Kidney (tissue), 22 donors: ENCODE measurements at regions of chr16 and their contacts with region 1.

Region 1: GRCh38 chr16:52488837-52489289 is 58.1 kb downstream of the TOX3 start:
- DNase-seq: no peak
- H3K4me3 ChIP-seq: no peak overlapping the region
- H3K27ac ChIP-seq: no peak overlapping the region
- H3K4me1 ChIP-seq: peaks cover 0 to 12% (median 3%) of the 10 kb centered on the region in 3 donors
- H3K27me3 ChIP-seq: no peaks in the 10 kb centered on the region
- CTCF ChIP-seq: no peak

Region 2: GRCh38 chr16:52351451-52351850 is 137.4 kb before region 1 on chr16:
- intact Hi-C with region 1: no loop called
- DNase-seq: no peak
- H3K4me3 ChIP-seq: no peak overlapping the region
- H3K27ac ChIP-seq: no peak overlapping the region
- H3K4me1 ChIP-seq: no peaks in the 10 kb centered on the region
- H3K27me3 ChIP-seq: no peaks in the 10 kb centered on the region
- CTCF ChIP-seq: no peak

Region 3: DNA sequence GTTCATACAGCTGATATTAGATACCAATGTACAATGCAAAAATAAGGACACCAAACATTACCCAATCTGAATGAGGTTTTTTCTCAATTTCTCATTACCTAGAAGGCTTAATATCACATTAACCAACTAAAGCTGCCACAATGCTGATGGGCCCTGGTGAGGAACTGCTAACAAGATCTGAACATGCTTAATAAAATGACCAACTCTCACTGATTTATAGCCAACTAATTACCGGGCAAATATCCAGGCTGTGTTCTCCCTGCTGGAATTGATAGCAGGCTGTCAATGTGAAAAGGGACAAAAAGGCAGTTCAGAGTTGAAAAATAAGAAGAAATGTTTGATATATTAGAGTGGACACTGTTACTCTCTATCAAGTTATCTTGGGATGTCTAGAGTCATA is 66.6 kb before region 1 on chr16:
- intact Hi-C with region 1: loop called (anchors 10 kb)
- DNase-seq: peak in 1 of 5 donors; percentile 14
- H3K4me3 ChIP-seq: no peak overlapping the region
- H3K27ac ChIP-seq: no peak overlapping the region
- H3K4me1 ChIP-seq: no peaks in the 10 kb centered on the region
- H3K27me3 ChIP-seq: no peaks in the 10 kb centered on the region
- CTCF ChIP-seq: no peak

Region 4: DNA sequence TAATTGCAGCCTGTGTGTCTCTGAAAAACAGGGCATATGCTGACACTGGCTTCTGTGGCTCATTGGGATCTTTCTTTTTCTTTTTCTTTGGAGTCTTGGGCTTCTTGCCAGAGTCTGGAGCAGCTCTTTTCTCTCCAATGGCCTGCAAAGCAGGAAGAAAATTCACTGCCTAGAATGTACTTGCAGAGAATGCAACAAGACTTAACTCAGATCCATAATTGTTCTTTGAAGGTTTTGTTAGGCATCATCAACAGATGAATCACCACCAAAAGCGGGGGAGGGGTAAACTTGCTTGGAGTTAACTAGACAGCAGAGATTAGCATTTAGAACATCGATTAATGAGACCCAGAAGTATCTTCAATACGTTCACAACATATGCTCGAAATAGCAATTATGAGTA is 42.8 kb before region 1 on chr16:
- intact Hi-C with region 1: no loop called
- DNase-seq: peak in 1 of 5 donors; percentile 15
- H3K4me3 ChIP-seq: no peak overlapping the region
- H3K27ac ChIP-seq: no peak overlapping the region
- H3K4me1 ChIP-seq: no peaks in the 10 kb centered on the region
- H3K27me3 ChIP-seq: no peaks in the 10 kb centered on the region
- CTCF ChIP-seq: no peak

Region 5: DNA sequence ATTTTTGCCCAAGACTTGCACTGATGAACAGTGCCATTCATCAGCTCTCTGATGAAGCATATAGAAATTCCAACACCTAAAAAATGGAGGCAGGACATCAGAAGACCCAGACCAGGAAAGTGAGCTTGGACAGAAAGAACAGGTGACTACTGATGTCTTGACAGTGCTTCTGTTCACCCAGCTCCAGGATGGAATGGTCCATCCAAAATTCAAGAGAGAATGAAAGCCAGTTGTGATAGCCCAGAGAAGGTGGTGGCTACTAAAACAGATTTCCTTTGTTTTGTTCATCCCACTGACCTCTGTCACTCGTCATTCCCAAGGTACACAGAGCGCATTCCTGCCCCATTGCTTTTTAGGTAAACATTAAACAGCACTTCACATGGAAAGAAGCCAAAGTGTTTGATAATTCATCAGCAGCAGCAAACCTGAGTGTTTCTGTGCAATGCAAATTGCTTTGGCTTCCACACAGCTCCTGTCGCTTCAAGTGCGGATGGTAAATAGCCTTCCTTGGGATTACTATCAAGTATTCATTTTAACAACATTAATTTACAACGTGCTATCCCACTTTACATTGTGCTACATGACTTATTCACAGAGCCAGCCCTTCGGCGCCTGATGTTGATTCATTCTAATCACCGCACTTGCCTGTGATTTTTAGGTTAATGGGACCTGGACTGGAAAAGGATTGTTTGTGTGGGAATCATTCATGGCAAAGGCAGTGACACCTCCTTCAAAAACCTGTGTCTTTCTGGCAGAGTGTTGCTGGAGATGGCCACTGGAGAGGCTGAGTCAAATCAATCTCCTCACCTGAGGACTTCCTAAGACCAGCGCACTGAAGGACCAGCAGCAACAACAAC is 123.2 kb after region 1 on chr16:
- intact Hi-C with region 1: no loop called
- DNase-seq: peak in 3 of 5 donors; percentile 27 to 80 (median 56)
- H3K4me3 ChIP-seq: peak overlapping the region in 2 of 3 donors; percentile 41 to 61
- H3K27ac ChIP-seq: peak overlapping the region; percentile 68 to 80
- H3K4me1 ChIP-seq: peaks cover 0 to 19% (median 7%) of the 10 kb centered on the region in 3 donors
- H3K27me3 ChIP-seq: no peaks in the 10 kb centered on the region
- CTCF ChIP-seq: no peak